Dorsolateral prefrontal cortex (tissue), 120 donors: ENCODE measurements at regions of chr7 and their contacts with region 1.

Region 1: GRCh38 chr7:51187941-51188340 is 128.7 kb downstream of the COBL start:
- DNase-seq: peak; percentile 61 to 82 (median 78)
- H3K4me3 ChIP-seq: no peak overlapping the region
- H3K27ac ChIP-seq: peak overlapping the region; percentile 38 to 92 (median 84)
- H3K27me3 ChIP-seq: no peaks in the 10 kb centered on the region
- CTCF ChIP-seq: peak in 54 of 56 donors; percentile 24 to 79 (median 62)

Region 2: GRCh38 chr7:51246258-51247245 is 58.6 kb after region 1 on chr7:
- intact Hi-C with region 1: loop called (anchors 5 to 10 kb)
- DNase-seq: peak; percentile 57 to 96 (median 76)
- H3K4me3 ChIP-seq: peak overlapping the region in 3 of 59 donors; percentile 8 to 16 (median 8)
- H3K27ac ChIP-seq: peak overlapping the region; percentile 21 to 99 (median 89)
- H3K27me3 ChIP-seq: no peaks in the 10 kb centered on the region
- CTCF ChIP-seq: peak in 29 of 56 donors; percentile 4 to 48 (median 23)

Region 3: GRCh38 chr7:51357821-51358220 is 169.9 kb after region 1 on chr7:
- intact Hi-C with region 1: loop called in 1 of 2 experiments (anchors 5 kb)
- DNase-seq: no peak
- H3K4me3 ChIP-seq: no peak overlapping the region
- H3K27ac ChIP-seq: peak overlapping the region in 1 of 59 donors; percentile 1
- H3K27me3 ChIP-seq: no peaks in the 10 kb centered on the region
- CTCF ChIP-seq: peak in 51 of 56 donors; percentile 28 to 79 (median 52)